Lower leg skin (tissue), 4 donors: ENCODE measurements at regions of chr9 and their contacts with region 1.

Region 1: GRCh38 chr9:6673326-6674025 is 27.9 kb upstream of the GLDC start:
- DNase-seq: no peak
- H3K4me3 ChIP-seq: no peak overlapping the region
- CTCF ChIP-seq: no peak
- POLR2A ChIP-seq: no peak

Region 2: GRCh38 chr9:4792572-4793458 is 1880.7 kb before region 1 on chr9 and contains the start of gene RCL1:
- intact Hi-C with region 1: no loop called
- DNase-seq: peak; percentile 93 to 99
- H3K4me3 ChIP-seq: peak within 1 kb of the TSS; percentile 98
- CTCF ChIP-seq: no peak
- POLR2A ChIP-seq: peak in 1 of 2 donors; percentile 31
- total RNA-seq, gene RCL1: 30.8 to 54.8 (median 38.4) TPM

Region 3: GRCh38 chr9:5999443-6000101 is 673.9 kb before region 1 on chr9:
- intact Hi-C with region 1: loop called (anchors 5 kb)
- DNase-seq: no peak
- H3K4me3 ChIP-seq: no peak overlapping the region
- CTCF ChIP-seq: no peak
- POLR2A ChIP-seq: no peak

Region 4: DNA sequence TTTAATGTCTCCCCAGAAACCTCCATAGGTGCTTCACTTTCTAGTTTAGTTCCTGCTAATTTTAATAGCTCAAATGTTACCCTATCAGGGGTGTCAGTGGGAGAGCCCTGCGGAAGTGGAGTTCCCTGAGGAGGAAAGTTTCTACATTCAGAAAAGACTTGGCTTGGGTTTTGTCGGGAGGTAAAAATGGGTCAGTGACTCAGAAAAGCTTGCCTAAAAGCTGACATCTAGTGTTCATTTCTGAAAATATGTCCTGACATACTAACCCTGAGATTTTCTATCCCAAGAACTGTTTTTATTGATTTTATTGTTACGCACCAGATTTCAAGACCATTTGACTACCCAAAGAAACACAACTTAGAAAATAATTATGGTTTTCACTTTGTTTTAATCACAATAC is 12.9 kb after region 1 on chr9:
- intact Hi-C with region 1: no loop called
- DNase-seq: no peak
- H3K4me3 ChIP-seq: no peak overlapping the region
- CTCF ChIP-seq: no peak
- POLR2A ChIP-seq: no peak